AG04450 (cell line): ENCODE measurements at regions of chr7 and their contacts with region 1.

Region 1: DNA sequence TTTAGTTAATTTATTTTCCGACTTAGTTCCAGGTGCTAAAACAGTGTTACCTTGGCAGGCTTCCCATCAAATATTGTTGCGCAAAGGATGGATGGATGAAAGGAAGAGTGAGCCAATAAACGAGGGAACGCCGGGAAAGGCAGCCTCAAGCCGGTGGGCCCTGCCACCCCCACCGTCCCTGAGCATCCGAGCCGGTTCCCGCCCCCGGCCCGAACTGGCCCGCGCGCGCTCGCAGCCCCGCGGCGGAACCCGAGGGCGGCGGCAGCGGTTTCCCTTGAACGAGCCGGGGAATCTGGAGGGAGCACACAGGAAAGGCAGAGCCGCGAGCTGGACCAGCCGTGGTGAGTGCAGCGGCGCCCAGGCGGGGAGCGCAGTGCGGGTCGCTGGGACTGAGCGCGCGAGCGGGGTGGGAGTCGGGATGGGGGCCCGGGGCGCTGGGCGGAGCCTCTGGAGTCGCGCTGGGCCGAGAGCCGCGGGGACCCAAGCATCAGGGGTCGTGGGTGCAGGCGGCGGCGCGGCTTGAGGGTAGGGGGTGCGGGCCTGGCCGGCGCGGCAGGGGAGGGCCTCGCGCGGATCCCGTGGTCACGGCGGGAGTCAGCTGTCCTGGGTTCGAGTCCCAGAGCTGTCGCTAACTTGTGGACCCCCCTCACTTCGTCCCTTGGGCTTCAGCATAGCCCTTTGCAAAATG is at the start of gene AGK:
- DNase-seq: peak; percentile 36
- H3K4me3 ChIP-seq: peak within 1 kb of the TSS; percentile 92
- H3K27ac ChIP-seq: peak within 1 kb of the TSS; percentile 61
- H3K27me3 ChIP-seq: no peaks in the 10 kb centered on the region
- CTCF ChIP-seq: no peak
- polyA plus RNA-seq, gene AGK: 39.0 and 42.5 TPM in 2 replicates

Region 2: DNA sequence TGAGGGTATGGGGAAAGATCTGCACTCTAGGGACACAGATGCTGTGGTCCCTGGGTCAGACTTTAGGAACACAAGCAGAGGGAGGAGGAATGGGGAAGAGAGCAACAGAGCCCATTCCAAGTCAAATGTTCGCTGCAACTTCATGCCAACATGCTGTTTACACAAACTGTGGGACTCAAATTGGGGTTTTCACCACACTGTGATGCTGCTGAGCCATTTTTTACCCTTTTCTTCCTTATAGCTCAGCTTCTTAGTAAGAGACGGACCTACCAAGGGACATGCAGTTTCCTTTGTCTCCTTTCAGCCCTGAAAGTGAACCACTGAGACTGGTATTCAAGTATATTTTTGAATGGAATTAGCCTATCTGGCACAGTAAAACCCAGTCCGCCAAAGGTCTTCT is 64.3 kb before region 1 on chr7:
- CTCF ChIA-PET with region 1: no interaction called
- POLR2A ChIA-PET with region 1: no interaction called
- DNase-seq: no peak
- H3K4me3 ChIP-seq: no peak overlapping the region
- H3K27ac ChIP-seq: no peak overlapping the region
- H3K27me3 ChIP-seq: no peaks in the 10 kb centered on the region
- CTCF ChIP-seq: no peak

Region 3: DNA sequence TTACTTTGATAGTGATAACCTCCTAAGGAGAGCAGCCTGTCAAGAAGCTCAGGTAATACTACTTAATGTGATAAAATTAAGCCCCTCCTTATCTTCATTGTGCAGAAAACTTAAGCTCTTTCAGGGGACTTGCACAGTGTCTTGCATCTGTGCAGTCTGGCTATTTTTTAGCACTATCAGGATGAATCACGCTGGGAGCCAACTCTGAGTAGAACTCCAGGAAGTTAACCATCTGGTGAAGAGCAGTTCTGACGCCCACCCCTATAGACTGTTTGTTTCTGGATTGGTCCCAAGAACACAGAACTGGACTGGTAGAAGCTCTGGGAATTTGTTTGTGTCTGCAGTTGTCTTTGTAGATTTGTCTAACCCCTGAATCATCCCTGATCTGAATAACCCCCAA is 41.9 kb after region 1 on chr7:
- CTCF ChIA-PET with region 1: no interaction called
- POLR2A ChIA-PET with region 1: interaction called, 12 read pairs
- DNase-seq: peak; percentile 74
- H3K4me3 ChIP-seq: no peak overlapping the region
- H3K27ac ChIP-seq: no peak overlapping the region
- H3K27me3 ChIP-seq: no peaks in the 10 kb centered on the region
- CTCF ChIP-seq: no peak